ENCODE measurements at regions of chr2 and their contacts with region 1.

Region 1: GRCh38 chr2:218406209-218406948 is 6.7 kb downstream of the CTDSP1 start:
- DNase-seq: peak; percentile 96
- H3K4me3 Mint-ChIP-seq: peak overlapping the region; percentile 82
- H3K27ac Mint-ChIP-seq: peak overlapping the region; percentile 75
- H3K4me1 Mint-ChIP-seq: peaks cover 34% of the 10 kb centered on the region
- H3K27me3 Mint-ChIP-seq: peaks cover 2% of the 10 kb centered on the region

Region 2: GRCh38 chr2:217573571-217573970 is 832.8 kb before region 1 on chr2:
- CTCF ChIA-PET with region 1: no interaction called
- intact Hi-C with region 1: no loop called
- DNase-seq: no peak
- H3K4me3 Mint-ChIP-seq: no peak overlapping the region
- H3K27ac Mint-ChIP-seq: no peak overlapping the region
- H3K4me1 Mint-ChIP-seq: no peaks in the 10 kb centered on the region
- H3K27me3 Mint-ChIP-seq: no peaks in the 10 kb centered on the region

Region 3: GRCh38 chr2:218292048-218293014 is 114.0 kb before region 1 on chr2 and contains the start of gene TMBIM1:
- CTCF ChIA-PET with region 1: interaction called, 3 read pairs
- intact Hi-C with region 1: loop called (anchors 1 kb)
- DNase-seq: peak; percentile 75
- H3K4me3 Mint-ChIP-seq: peak within 1 kb of the TSS; percentile 78
- H3K27ac Mint-ChIP-seq: peak within 1 kb of the TSS; percentile 94
- H3K4me1 Mint-ChIP-seq: peaks cover 46% of the 10 kb centered on the region
- H3K27me3 Mint-ChIP-seq: no peaks in the 10 kb centered on the region
- total RNA-seq, gene TMBIM1: 43.1 to 43.4 TPM

Region 4: GRCh38 chr2:218466016-218466521 is 59.7 kb after region 1 on chr2:
- CTCF ChIA-PET with region 1: interaction called, 5 read pairs
- intact Hi-C with region 1: loop called (anchors 1 kb)
- DNase-seq: no peak
- H3K4me3 Mint-ChIP-seq: no peak overlapping the region
- H3K27ac Mint-ChIP-seq: no peak overlapping the region
- H3K4me1 Mint-ChIP-seq: peaks cover 2% of the 10 kb centered on the region
- H3K27me3 Mint-ChIP-seq: no peaks in the 10 kb centered on the region

Region 5: GRCh38 chr2:218648088-218648786 is 241.9 kb after region 1 on chr2:
- CTCF ChIA-PET with region 1: no interaction called
- intact Hi-C with region 1: loop called (anchors 1 kb)
- DNase-seq: peak; percentile 70
- H3K4me3 Mint-ChIP-seq: no peak overlapping the region
- H3K27ac Mint-ChIP-seq: no peak overlapping the region
- H3K4me1 Mint-ChIP-seq: peaks cover 6% of the 10 kb centered on the region
- H3K27me3 Mint-ChIP-seq: no peaks in the 10 kb centered on the region

Region 6: GRCh38 chr2:218691234-218691633 is 284.9 kb after region 1 on chr2:
- CTCF ChIA-PET with region 1: no interaction called
- intact Hi-C with region 1: loop called (anchors 1 kb)
- DNase-seq: no peak
- H3K4me3 Mint-ChIP-seq: no peak overlapping the region
- H3K27ac Mint-ChIP-seq: no peak overlapping the region
- H3K4me1 Mint-ChIP-seq: peaks cover 2% of the 10 kb centered on the region
- H3K27me3 Mint-ChIP-seq: no peaks in the 10 kb centered on the region